Activated naive CD4-positive, alpha-beta T cell treated with anti-CD3 and anti-CD28 coated beads for 36 hours (primary cell): ENCODE measurements at regions of chr6 and their contacts with region 1.

Region 1: DNA sequence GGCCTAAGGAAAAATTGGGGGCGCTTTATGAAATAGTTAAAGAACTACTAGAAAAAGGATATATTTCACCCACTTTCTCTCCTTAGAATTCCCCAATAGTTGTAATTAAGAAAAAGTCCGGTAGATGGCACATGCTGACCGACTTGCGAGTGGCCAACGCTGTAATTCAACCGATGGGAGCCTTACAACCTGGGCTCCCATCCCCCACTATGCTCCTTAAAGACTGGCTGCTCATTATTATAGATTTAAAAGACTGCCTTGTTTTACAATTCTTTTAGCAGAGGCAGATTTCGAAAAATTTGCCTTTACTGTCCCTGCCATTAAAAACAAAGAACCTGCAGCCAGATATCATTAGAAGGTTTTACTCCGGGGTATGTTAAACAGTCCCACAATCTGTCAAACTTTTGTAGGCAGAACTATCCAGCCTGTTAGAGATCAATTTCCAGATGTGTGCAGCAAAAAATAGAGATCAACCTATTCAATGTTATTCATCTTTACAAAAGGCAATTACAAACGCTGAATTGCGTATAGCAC is 58.5 kb upstream of the PRSS16 start:
- DNase-seq: peak; percentile 67
- H3K4me3 Mint-ChIP-seq: peak overlapping the region; percentile 84
- H3K27ac Mint-ChIP-seq: no peak overlapping the region
- H3K4me1 Mint-ChIP-seq: peaks cover 9% of the 10 kb centered on the region
- H3K27me3 Mint-ChIP-seq: no peaks in the 10 kb centered on the region

Region 2: GRCh38 chr6:27126815-27127537 is 62.0 kb before region 1 on chr6:
- CTCF ChIA-PET with region 1: no interaction called
- intact Hi-C with region 1: loop called (anchors 2 kb)
- DNase-seq: peak; percentile 92
- H3K4me3 Mint-ChIP-seq: peak overlapping the region; percentile 56
- H3K27ac Mint-ChIP-seq: peak overlapping the region; percentile 69
- H3K4me1 Mint-ChIP-seq: peaks cover 13% of the 10 kb centered on the region
- H3K27me3 Mint-ChIP-seq: no peaks in the 10 kb centered on the region

Region 3: GRCh38 chr6:27251606-27252251 is 62.8 kb after region 1 on chr6:
- CTCF ChIA-PET with region 1: no interaction called
- intact Hi-C with region 1: loop called (anchors 2 kb)
- DNase-seq: peak; percentile 86
- H3K4me3 Mint-ChIP-seq: peak overlapping the region; percentile 89
- H3K27ac Mint-ChIP-seq: no peak overlapping the region
- H3K4me1 Mint-ChIP-seq: peaks cover 9% of the 10 kb centered on the region
- H3K27me3 Mint-ChIP-seq: peaks cover 63% of the 10 kb centered on the region

Region 4: GRCh38 chr6:27280064-27280539 is 91.2 kb after region 1 on chr6:
- CTCF ChIA-PET with region 1: no interaction called
- intact Hi-C with region 1: no loop called
- DNase-seq: peak; percentile 43
- H3K4me3 Mint-ChIP-seq: peak overlapping the region; percentile 63
- H3K27ac Mint-ChIP-seq: peak overlapping the region; percentile 36
- H3K4me1 Mint-ChIP-seq: peaks cover 4% of the 10 kb centered on the region
- H3K27me3 Mint-ChIP-seq: peaks cover 70% of the 10 kb centered on the region

Region 5: GRCh38 chr6:27374824-27375612 is 186.1 kb after region 1 on chr6:
- CTCF ChIA-PET with region 1: no interaction called
- intact Hi-C with region 1: loop called (anchors 1 kb)
- DNase-seq: peak; percentile 89
- H3K4me3 Mint-ChIP-seq: peak overlapping the region; percentile 82
- H3K27ac Mint-ChIP-seq: peak overlapping the region; percentile 67
- H3K4me1 Mint-ChIP-seq: peaks cover 18% of the 10 kb centered on the region
- H3K27me3 Mint-ChIP-seq: no peaks in the 10 kb centered on the region

Region 6: GRCh38 chr6:27608916-27609883 is 420.2 kb after region 1 on chr6:
- CTCF ChIA-PET with region 1: no interaction called
- intact Hi-C with region 1: loop called (anchors 1 kb)
- DNase-seq: peak; percentile 30
- H3K4me3 Mint-ChIP-seq: no peak overlapping the region
- H3K27ac Mint-ChIP-seq: no peak overlapping the region
- H3K4me1 Mint-ChIP-seq: peaks cover 13% of the 10 kb centered on the region
- H3K27me3 Mint-ChIP-seq: peaks cover 51% of the 10 kb centered on the region